ENCODE measurements at regions of chr7 and their contacts with region 1.

Region 1: GRCh38 chr7:152025077-152025936 is at the start of gene GALNT11:
- DNase-seq: peak; percentile 95
- ATAC-seq: peak; percentile 88 to 97 (median 90)
- H3K4me3 ChIP-seq: peak within 1 kb of the TSS; percentile 88
- H3K4me3 Mint-ChIP-seq: peak within 1 kb of the TSS; percentile 88
- H3K27ac ChIP-seq: peak within 1 kb of the TSS; percentile 93
- H3K27ac Mint-ChIP-seq: peak within 1 kb of the TSS; percentile 96 to 98
- H3K4me1 ChIP-seq: peaks cover 42% of the 10 kb centered on the region
- H3K4me1 Mint-ChIP-seq: peaks cover 33 to 45% of the 10 kb centered on the region in 2 donors
- H3K27me3 ChIP-seq: no peaks in the 10 kb centered on the region
- H3K27me3 Mint-ChIP-seq: peaks cover 3 to 4% of the 10 kb centered on the region in 2 donors
- CTCF ChIP-seq: no peak
- total RNA-seq, gene GALNT11: 31.7 to 50.2 (median 44.0) TPM

Region 2: GRCh38 chr7:151876899-151877777 is 148.2 kb before region 1 on chr7 and contains the start of gene PRKAG2:
- intact Hi-C with region 1: loop called (anchors 10 kb)
- DNase-seq: peak; percentile 65 to 79
- ATAC-seq: peak; percentile 53 to 70 (median 64)
- H3K4me3 ChIP-seq: peak within 1 kb of the TSS; percentile 59
- H3K4me3 Mint-ChIP-seq: peak within 1 kb of the TSS; percentile 98
- H3K27ac ChIP-seq: peak within 1 kb of the TSS; percentile 55
- H3K27ac Mint-ChIP-seq: peak within 1 kb of the TSS; percentile 83 to 96
- H3K4me1 ChIP-seq: peaks cover 24% of the 10 kb centered on the region
- H3K4me1 Mint-ChIP-seq: peaks cover 13 to 35% of the 10 kb centered on the region in 2 donors
- H3K27me3 ChIP-seq: no peaks in the 10 kb centered on the region
- H3K27me3 Mint-ChIP-seq: no peaks in the 10 kb centered on the region
- CTCF ChIP-seq: no peak
- total RNA-seq, gene PRKAG2: 42.6 to 66.5 (median 64.4) TPM

Region 3: DNA sequence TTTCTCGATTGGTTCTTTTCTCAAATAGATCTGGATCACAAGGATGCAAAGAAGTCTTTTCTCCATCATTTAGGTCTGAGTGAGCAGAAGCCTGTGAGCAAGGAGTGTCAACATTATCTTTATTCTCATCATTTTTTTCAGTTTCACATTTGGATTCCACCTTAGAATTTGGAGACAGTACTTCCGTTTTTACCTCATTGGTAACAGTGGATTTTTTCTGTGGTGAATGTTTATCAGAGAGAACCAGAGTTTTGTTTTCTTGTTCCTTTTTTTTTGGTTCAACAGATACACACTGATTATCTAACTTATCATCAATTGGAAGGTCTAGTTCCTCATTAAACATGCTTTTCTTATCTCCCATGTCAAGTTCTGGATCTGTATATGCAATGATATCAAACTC is 151.5 kb after region 1 on chr7:
- intact Hi-C with region 1: no loop called
- DNase-seq: no peak
- ATAC-seq: peak in 1 of 3 donors; percentile 68
- H3K4me3 ChIP-seq: no peak overlapping the region
- H3K4me3 Mint-ChIP-seq: no peak overlapping the region
- H3K27ac ChIP-seq: no peak overlapping the region
- H3K27ac Mint-ChIP-seq: no peak overlapping the region
- H3K4me1 ChIP-seq: no peaks in the 10 kb centered on the region
- H3K4me1 Mint-ChIP-seq: peaks cover 4 to 5% of the 10 kb centered on the region in 2 donors
- H3K27me3 ChIP-seq: no peaks in the 10 kb centered on the region
- H3K27me3 Mint-ChIP-seq: no peaks in the 10 kb centered on the region
- CTCF ChIP-seq: no peak

Measured in natural killer cell (primary cell).